ENCODE measurements at regions of chr9 and their contacts with region 1.

Region 1: GRCh38 chr9:137029058-137029936 is 1.3 kb upstream of the ABCA2 start:
- DNase-seq: peak; percentile 85
- ATAC-seq: peak; percentile 53
- H3K4me3 Mint-ChIP-seq: peak overlapping the region; percentile 65
- H3K27ac Mint-ChIP-seq: peak overlapping the region; percentile 90
- H3K4me1 Mint-ChIP-seq: peaks cover 55% of the 10 kb centered on the region
- H3K27me3 Mint-ChIP-seq: peaks cover 3% of the 10 kb centered on the region

Region 2: GRCh38 chr9:136849038-136849959 is 180.0 kb before region 1 on chr9 and contains the start of gene PHPT1:
- CTCF ChIA-PET with region 1: interaction called, 38 read pairs
- DNase-seq: peak; percentile 98
- ATAC-seq: peak; percentile 93
- H3K4me3 Mint-ChIP-seq: peak within 1 kb of the TSS; percentile 88
- H3K27ac Mint-ChIP-seq: peak within 1 kb of the TSS; percentile 92
- H3K4me1 Mint-ChIP-seq: peaks cover 16% of the 10 kb centered on the region
- H3K27me3 Mint-ChIP-seq: peaks cover 20% of the 10 kb centered on the region
- total RNA-seq, gene PHPT1: 96.8 to 116 TPM

Region 3: DNA sequence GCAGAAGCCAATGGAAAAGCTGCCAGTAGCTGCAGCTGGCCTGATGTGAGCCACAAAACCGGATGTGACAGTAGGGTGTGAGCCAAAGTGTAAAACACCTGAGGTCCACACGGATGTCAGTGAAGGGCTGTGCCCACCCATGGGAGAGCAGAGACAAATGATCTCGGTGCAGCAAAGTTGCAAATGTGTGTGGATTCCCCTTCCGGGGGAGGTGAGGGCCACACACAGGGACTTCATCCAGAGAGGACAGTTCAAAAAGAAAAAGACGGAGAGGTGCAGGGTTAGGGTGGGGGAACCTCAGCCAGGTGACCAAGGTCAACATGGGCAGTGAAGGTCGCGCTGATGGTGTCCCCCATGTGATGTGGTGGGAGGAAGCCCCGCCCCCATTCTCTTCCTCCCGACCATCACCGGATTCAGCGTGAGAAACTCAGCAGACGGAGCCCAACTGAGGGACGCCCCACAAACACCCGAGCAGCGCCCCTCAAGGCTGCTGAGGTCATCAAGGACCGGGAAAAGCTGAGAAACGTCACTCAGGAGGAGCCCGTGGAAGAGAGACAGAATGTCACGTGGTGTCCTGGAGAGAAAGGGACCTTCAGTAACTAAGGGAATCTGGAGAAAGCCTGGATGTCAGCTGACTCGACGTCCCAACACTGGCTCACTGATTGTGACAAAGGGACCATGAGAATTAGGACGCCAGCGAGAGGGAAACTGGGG is 63.4 kb before region 1 on chr9:
- CTCF ChIA-PET with region 1: interaction called, 16 read pairs
- DNase-seq: peak; percentile 81
- ATAC-seq: peak; percentile 72
- H3K4me3 Mint-ChIP-seq: peak overlapping the region; percentile 58
- H3K27ac Mint-ChIP-seq: peak overlapping the region; percentile 86
- H3K4me1 Mint-ChIP-seq: peaks cover 36% of the 10 kb centered on the region
- H3K27me3 Mint-ChIP-seq: no peaks in the 10 kb centered on the region

Region 4: DNA sequence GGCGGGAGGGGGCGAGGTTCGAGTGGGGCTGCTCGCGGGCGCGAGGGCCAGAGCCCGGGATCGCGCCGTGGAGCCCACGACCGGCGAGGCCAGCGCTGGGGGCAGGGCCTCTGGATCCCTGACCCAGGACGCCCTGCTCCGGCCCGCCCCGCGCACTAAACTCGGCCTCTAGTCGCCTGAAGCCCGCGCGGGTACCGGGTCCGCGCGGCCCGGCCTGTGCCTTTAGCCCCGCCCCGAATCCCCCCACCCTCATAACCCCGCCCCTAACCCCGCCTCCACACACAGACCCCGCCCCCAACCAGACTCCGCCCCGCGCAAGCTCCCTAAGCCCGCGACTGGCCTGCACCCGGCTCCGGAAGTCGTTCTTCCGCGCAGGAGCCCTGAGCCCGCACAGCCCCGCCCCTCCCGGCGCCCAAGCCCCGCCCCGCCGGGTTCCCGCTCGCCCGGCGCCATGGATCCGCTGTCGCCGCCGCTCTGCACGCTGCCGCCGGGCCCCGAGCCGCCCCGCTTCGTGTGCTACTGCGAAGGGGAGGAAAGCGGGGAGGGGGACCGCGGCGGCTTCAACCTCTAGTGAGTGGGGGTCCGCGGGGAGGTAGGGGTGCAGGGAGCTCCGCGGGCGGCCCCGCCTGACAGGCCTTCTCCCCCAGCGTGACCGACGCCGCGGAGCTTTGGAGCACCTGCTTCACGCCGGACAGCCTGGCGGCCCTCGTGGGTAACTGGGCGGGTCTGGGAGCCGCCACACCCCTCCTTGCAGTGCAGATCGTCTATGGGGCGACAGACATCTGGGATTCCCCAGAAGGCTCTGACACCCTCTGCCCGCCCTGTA is 37.1 kb before region 1 on chr9 and contains the start of gene PAXX:
- CTCF ChIA-PET with region 1: interaction called, 234 read pairs
- DNase-seq: peak; percentile 96
- ATAC-seq: peak; percentile 88
- H3K4me3 Mint-ChIP-seq: peak within 1 kb of the TSS; percentile 84
- H3K27ac Mint-ChIP-seq: peak within 1 kb of the TSS; percentile 82
- H3K4me1 Mint-ChIP-seq: peaks cover 32% of the 10 kb centered on the region
- H3K27me3 Mint-ChIP-seq: peaks cover 9% of the 10 kb centered on the region
- total RNA-seq, gene PAXX: 68.6 to 94.8 TPM

Region 5: DNA sequence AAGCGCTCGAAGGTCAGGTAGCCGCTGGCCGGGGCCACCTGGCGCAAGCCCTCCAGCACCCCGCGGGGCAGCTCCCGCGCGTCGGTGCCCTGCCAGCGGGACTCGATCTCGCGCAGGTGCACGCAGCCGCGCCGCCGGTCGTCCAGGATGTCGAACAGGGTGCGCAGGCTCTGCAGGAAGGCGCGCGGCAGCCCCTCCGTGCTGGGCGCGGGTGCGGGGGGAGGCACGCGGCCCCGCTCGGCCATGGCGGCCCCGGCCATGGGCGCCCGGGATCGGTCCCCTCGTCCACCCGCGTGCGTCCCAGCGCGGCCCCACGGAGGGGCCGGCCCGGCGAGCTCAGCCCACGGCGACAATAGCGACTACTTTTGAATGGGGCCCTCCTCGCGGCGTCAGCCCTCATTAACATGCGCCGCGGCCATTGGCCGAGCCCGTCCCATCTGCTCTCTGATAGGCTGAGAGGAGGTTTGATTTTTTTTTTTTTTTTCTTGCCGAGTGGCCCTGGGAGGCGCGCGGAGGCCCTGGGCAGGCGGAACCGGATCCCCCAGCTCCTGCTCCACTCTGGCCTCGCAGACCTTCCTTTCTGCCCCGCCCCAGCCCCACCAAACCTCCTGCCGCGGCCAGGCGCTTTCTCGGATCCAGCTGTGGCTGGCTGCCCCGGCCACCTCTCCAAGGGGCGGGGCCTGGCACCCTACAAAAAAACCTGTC is 41.1 kb after region 1 on chr9 and contains the start of gene SAPCD2:
- CTCF ChIA-PET with region 1: interaction called, 98 read pairs
- DNase-seq: peak; percentile 93
- ATAC-seq: peak; percentile 91
- H3K4me3 Mint-ChIP-seq: peak within 1 kb of the TSS; percentile 78
- H3K27ac Mint-ChIP-seq: peak within 1 kb of the TSS; percentile 83
- H3K4me1 Mint-ChIP-seq: peaks cover 27% of the 10 kb centered on the region
- H3K27me3 Mint-ChIP-seq: no peaks in the 10 kb centered on the region
- total RNA-seq, gene SAPCD2: 31.9 to 40.1 TPM

Region 6: DNA sequence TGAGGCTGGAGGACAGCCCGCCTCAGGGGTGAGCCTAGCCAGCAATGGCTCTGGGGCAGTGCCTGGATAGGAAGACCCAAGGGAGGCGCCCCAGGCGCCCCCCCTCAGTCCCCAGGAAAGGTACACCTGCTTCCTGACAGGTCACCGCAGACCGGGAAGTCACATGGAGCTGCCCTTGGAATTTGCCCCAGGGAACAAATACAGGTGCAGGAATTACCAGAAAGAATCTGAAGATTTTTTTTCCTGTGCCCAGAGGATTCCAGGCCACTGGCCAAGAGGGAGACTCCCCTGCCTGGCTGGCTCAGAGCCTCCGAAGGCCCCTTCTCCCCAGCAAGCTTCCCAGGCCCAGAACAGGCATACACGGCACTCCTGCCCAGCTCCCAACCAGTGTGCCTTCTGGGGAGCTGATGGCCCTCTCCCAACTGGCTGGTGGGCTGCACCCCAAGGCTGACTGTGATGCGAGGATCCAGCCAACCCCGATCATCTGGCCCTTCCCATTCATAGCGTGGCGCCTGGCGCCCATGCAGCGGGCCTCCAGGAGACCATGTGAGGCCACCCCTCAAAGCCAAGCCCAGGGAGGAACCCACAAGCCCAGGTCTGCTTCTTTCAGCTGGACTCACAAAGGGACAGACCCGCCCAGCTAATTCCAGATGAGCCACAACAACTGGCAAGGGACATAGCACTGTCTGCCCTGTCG is 168.9 kb after region 1 on chr9:
- CTCF ChIA-PET with region 1: no interaction called
- DNase-seq: no peak
- ATAC-seq: no peak
- H3K4me3 Mint-ChIP-seq: no peak overlapping the region
- H3K27ac Mint-ChIP-seq: no peak overlapping the region
- H3K4me1 Mint-ChIP-seq: peaks cover 20% of the 10 kb centered on the region
- H3K27me3 Mint-ChIP-seq: no peaks in the 10 kb centered on the region

Region 7: DNA sequence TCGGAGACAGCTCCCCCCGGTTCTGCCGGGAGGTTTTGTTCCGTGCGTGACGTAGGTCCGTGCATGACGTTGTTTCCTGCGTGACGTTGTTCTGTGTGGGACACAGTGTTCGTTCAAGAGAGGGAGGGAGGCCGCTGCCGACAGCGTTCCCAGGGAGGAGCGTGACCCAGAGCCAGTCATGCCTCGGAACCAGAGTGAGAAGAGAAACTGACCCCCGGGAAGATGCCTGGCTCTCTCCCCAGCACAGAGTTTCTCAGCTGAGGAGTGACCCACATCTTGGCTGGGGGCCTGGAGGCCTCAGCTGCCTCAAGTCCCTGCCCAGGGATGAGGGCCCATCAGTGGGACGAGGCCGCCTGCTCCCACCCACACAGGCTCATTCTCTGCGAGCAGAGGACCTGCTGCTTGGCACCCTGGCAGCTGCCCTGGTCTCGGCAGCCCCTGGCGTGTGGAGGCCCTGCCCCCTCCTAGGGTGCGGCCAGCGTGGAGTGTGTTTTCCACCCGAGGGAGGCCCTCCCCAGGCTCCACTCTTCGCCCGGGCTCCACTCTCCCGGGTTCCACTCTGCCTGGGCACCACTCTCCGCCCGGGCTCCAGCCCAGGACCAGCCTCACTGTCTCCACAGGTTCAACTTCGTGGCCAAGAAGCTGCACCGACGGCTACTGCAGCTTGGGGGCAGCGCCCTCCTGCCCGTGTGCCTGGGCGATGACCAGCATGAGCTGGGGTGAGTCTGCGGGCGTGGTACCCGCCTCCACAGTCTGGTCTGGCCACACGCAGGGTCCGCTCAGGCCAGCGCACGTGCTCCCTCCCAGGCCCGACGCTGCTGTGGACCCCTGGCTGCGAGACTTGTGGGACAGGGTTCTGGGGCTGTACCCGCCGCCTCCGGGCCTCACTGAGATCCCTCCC is 184.1 kb after region 1 on chr9:
- CTCF ChIA-PET with region 1: no interaction called
- DNase-seq: no peak
- ATAC-seq: no peak
- H3K4me3 Mint-ChIP-seq: no peak overlapping the region
- H3K27ac Mint-ChIP-seq: no peak overlapping the region
- H3K4me1 Mint-ChIP-seq: no peaks in the 10 kb centered on the region
- H3K27me3 Mint-ChIP-seq: no peaks in the 10 kb centered on the region

Region 8: GRCh38 chr9:137266162-137266527 is 236.8 kb after region 1 on chr9:
- CTCF ChIA-PET with region 1: no interaction called
- DNase-seq: no peak
- ATAC-seq: no peak
- H3K4me3 Mint-ChIP-seq: no peak overlapping the region
- H3K27ac Mint-ChIP-seq: no peak overlapping the region
- H3K4me1 Mint-ChIP-seq: peaks cover 18% of the 10 kb centered on the region
- H3K27me3 Mint-ChIP-seq: no peaks in the 10 kb centered on the region

Region 9: DNA sequence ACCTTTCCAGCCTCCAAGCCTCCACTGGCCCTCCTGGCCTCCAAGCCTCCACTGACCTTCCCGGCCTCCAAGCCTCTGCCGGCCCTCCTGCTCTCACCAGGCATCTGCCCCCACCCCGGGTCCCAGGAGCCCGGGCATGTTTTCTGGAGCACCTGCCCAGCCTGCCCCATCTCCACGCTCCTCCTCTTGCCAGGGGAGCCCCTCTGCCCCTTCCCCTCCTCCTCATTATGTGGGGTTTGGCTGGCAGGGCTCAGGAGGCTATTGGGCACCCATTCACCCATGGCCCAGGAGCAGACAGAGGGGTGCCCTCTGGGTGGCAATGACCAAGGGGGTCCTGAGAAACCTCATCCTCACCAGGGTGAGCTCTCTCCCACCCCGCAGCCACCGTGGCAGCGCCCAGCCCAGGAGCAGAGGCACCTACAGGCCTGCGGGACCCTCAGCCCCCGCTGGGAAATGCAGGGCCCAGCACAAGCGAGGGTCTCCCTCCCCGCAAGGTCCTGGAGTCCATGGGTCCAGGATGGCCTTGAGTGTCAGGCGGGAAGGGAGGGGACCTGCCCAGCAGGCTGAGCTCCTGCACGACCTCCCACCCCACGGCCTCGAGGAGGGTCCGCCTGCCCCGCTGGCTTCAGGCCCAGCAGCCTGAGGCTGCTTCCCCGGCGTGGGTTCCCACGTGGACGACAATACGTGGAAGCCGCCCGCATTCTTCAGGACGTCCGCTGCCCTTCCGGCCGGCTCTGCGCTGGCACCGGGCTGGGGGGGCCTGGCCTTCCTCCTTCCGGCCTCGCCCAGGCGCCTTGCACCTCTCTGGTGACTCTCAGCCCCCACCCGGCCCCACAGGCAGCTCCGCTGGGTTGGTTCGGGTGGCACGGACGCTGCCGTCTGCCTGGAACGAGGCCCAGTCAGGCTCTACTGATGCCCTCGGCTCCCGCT is 324.2 kb after region 1 on chr9:
- CTCF ChIA-PET with region 1: no interaction called
- DNase-seq: no peak
- ATAC-seq: no peak
- H3K4me3 Mint-ChIP-seq: no peak overlapping the region
- H3K27ac Mint-ChIP-seq: no peak overlapping the region
- H3K4me1 Mint-ChIP-seq: no peaks in the 10 kb centered on the region
- H3K27me3 Mint-ChIP-seq: no peaks in the 10 kb centered on the region

Measured in activated CD8-positive, alpha-beta memory T cell treated with anti-CD3 and anti-CD28 coated beads, Interleukin-2, amount 10 ng/mL, durations not matched to agents 7 days and 5 days (primary cell).